ENCODE measurements at regions of chr12 and their contacts with region 1.

Region 1: GRCh38 chr12:122123051-122123760 is 44.6 kb downstream of the MLXIP start:
- DNase-seq: peak; percentile 86
- H3K4me3 ChIP-seq: no peak overlapping the region
- H3K27ac ChIP-seq: peak overlapping the region in 1 of 2 experiments; percentile 32; a peak in 1 of 4 replicates
- H3K4me1 ChIP-seq: peaks cover 2 to 4% of the 10 kb centered on the region in 2 experiments; a peak in 2 of 4 replicates
- H3K27me3 ChIP-seq: no peaks in the 10 kb centered on the region
- CTCF ChIP-seq: peak; percentile 78
- EP300 ChIP-seq: no peak
- RAD21 ChIP-seq: peak; percentile 89

Region 2: DNA sequence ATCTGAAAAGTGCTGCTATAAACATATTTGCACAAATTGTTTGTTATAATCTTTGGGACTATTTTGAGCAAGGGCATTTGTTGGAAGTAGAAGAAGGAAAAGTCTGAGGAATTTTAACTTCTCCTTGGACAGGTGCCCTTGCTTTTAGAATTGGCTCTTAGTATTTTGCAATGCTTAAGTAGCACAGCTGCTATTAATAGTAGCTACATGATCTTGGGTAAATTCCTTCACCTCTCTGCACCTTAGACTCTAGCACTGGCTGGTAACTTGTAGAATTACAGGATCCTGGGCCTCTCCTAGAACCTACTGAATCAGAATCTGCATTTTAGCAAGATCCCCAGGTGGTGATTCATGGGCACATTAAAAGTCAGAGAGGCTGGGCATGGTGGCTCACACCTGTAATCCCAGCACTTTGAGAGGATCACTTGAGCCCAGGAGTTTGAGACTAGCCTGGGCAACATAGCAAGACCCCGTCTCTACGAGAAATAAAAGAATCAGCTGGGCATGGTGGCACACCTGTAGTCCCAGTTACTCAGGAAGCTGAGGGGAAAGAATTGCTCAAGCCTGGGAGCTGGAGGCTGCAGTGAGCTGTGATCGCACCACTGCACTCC is 421.4 kb before region 1 on chr12:
- CTCF ChIA-PET with region 1: no interaction called
- POLR2A ChIA-PET with region 1: no interaction called
- DNase-seq: no peak
- H3K4me3 ChIP-seq: no peak overlapping the region
- H3K27ac ChIP-seq: no peak overlapping the region
- H3K4me1 ChIP-seq: no peaks in the 10 kb centered on the region
- H3K27me3 ChIP-seq: no peaks in the 10 kb centered on the region
- CTCF ChIP-seq: no peak
- EP300 ChIP-seq: no peak
- RAD21 ChIP-seq: no peak

Region 3: GRCh38 chr12:122040579-122041386 is 82.4 kb before region 1 on chr12:
- CTCF ChIA-PET with region 1: interaction called, 11 read pairs
- POLR2A ChIA-PET with region 1: no interaction called
- DNase-seq: no peak
- H3K4me3 ChIP-seq: no peak overlapping the region
- H3K27ac ChIP-seq: no peak overlapping the region
- H3K4me1 ChIP-seq: no peaks in the 10 kb centered on the region
- H3K27me3 ChIP-seq: no peaks in the 10 kb centered on the region
- CTCF ChIP-seq: no peak
- EP300 ChIP-seq: no peak
- RAD21 ChIP-seq: no peak

Region 4: GRCh38 chr12:122064025-122064777 is 59.0 kb before region 1 on chr12:
- CTCF ChIA-PET with region 1: interaction called, 33 read pairs
- POLR2A ChIA-PET with region 1: no interaction called
- DNase-seq: peak; percentile 92
- H3K4me3 ChIP-seq: peak overlapping the region; percentile 9 to 18; a peak in 2 of 4 replicates
- H3K27ac ChIP-seq: peak overlapping the region; percentile 79 to 93
- H3K4me1 ChIP-seq: peaks cover 28 to 30% of the 10 kb centered on the region in 2 experiments; a peak in 3 of 4 replicates
- H3K27me3 ChIP-seq: no peaks in the 10 kb centered on the region
- CTCF ChIP-seq: peak; percentile 63
- EP300 ChIP-seq: no peak
- RAD21 ChIP-seq: peak; percentile 54

Region 5: GRCh38 chr12:122090759-122091515 is 32.3 kb before region 1 on chr12:
- CTCF ChIA-PET with region 1: interaction called, 14 read pairs
- POLR2A ChIA-PET with region 1: no interaction called
- DNase-seq: no peak
- H3K4me3 ChIP-seq: no peak overlapping the region
- H3K27ac ChIP-seq: peak overlapping the region in 1 of 2 experiments; percentile 89; a peak in 2 of 4 replicates
- H3K4me1 ChIP-seq: peaks cover 9 to 11% of the 10 kb centered on the region in 2 experiments; a peak in 2 of 4 replicates
- H3K27me3 ChIP-seq: no peaks in the 10 kb centered on the region
- CTCF ChIP-seq: no peak
- EP300 ChIP-seq: no peak
- RAD21 ChIP-seq: no peak

Region 6: DNA sequence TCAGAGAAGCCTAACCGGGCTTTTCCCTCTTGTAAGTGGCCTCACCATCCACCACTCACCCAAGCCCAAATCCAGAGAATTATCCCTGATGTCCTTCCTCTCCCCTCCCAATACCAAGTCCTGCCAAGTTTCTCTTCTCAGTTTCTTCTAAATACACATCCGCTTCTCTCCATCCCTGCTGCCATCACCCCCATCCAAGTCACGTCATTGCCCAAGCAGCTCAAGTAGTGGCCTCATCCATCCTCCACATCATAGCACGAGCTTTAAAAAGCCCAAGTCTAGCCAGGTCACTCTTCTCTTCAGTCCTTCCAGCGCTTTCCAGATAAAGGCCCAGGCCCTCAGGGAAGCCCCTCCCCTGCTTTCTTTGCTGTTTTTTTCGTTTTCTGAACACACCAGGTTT is 25.5 kb after region 1 on chr12:
- CTCF ChIA-PET with region 1: interaction called, 14 read pairs
- POLR2A ChIA-PET with region 1: no interaction called
- DNase-seq: no peak
- H3K4me3 ChIP-seq: no peak overlapping the region
- H3K27ac ChIP-seq: no peak overlapping the region
- H3K4me1 ChIP-seq: peaks cover 0 to 2% of the 10 kb centered on the region in 2 experiments; a peak in 1 of 4 replicates
- H3K27me3 ChIP-seq: no peaks in the 10 kb centered on the region
- CTCF ChIP-seq: no peak
- EP300 ChIP-seq: no peak
- RAD21 ChIP-seq: no peak

Region 7: DNA sequence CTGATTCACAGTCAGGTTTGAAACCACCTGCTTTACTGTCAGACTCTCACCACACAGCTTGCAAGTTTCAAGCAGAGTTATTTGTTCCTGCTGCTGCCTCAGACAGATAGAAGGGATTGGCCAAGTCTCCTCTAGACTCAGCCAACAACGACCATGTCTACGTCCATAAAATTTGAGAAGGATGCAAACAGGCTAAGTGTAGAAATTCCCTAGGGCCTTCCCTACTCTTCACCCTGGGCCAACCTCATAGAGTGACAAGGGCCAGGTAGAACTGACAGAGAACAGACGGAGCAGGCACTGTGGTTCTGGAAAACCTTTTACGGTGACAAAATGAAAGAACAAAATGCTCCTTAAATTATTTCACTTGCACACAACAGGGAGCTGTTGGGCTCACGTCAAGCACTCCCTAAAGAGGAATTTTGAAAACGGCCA is 259.7 kb after region 1 on chr12:
- CTCF ChIA-PET with region 1: no interaction called
- POLR2A ChIA-PET with region 1: no interaction called
- DNase-seq: no peak
- H3K4me3 ChIP-seq: no peak overlapping the region
- H3K27ac ChIP-seq: no peak overlapping the region
- H3K4me1 ChIP-seq: peaks cover 0 to 2% of the 10 kb centered on the region in 2 experiments; a peak in 1 of 4 replicates
- H3K27me3 ChIP-seq: no peaks in the 10 kb centered on the region
- CTCF ChIP-seq: no peak
- EP300 ChIP-seq: no peak
- RAD21 ChIP-seq: no peak